Gastrocnemius medialis (tissue), 4 donors: ENCODE measurements at regions of chr19 and their contacts with region 1.

Region 1: GRCh38 chr19:56393119-56394012 is at the start of gene ZNF582:
- DNase-seq: peak; percentile 81 to 87
- ATAC-seq: peak; percentile 95 to 96
- H3K4me3 ChIP-seq: peak within 1 kb of the TSS; percentile 68 to 83 (median 74)
- H3K27ac ChIP-seq: peak within 1 kb of the TSS; percentile 76 to 88 (median 85)
- H3K4me1 ChIP-seq: no peaks in the 10 kb centered on the region
- H3K27me3 ChIP-seq: no peaks in the 10 kb centered on the region
- CTCF ChIP-seq: peak in 4 of 5 experiments; percentile 17 to 71 (median 56)
- POLR2A ChIP-seq: peak in 1 of 2 donors; percentile 25
- total RNA-seq, gene ZNF582: 0.22 to 1.9 (median 0.83) TPM

Region 2: GRCh38 chr19:56367829-56368711 is 25.3 kb before region 1 on chr19:
- in situ Hi-C with region 1: no loop called
- intact Hi-C with region 1: loop called (anchors 1 kb)
- DNase-seq: peak; percentile 75 to 90
- ATAC-seq: peak; percentile 96 to 97
- H3K4me3 ChIP-seq: peak overlapping the region; percentile 75 to 94 (median 80)
- H3K27ac ChIP-seq: peak overlapping the region; percentile 78 to 86 (median 84)
- H3K4me1 ChIP-seq: peaks cover 10 to 18% of the 10 kb centered on the region in 2 donors
- H3K27me3 ChIP-seq: no peaks in the 10 kb centered on the region
- CTCF ChIP-seq: peak in 1 of 5 experiments; percentile 14
- POLR2A ChIP-seq: peak; percentile 23 to 39

Region 3: GRCh38 chr19:56403764-56404704 is 10.7 kb after region 1 on chr19 and contains the start of gene ZNF583:
- in situ Hi-C with region 1: no loop called
- intact Hi-C with region 1: loop called (anchors 1 kb)
- DNase-seq: peak; percentile 89 to 97
- ATAC-seq: peak; percentile 96 to 99
- H3K4me3 ChIP-seq: peak within 1 kb of the TSS; percentile 66 to 95 (median 84)
- H3K27ac ChIP-seq: peak within 1 kb of the TSS; percentile 90 to 93 (median 92)
- H3K4me1 ChIP-seq: peaks cover 12 to 14% of the 10 kb centered on the region in 2 donors
- H3K27me3 ChIP-seq: no peaks in the 10 kb centered on the region
- CTCF ChIP-seq: no peak
- POLR2A ChIP-seq: no peak
- total RNA-seq, gene ZNF583: 3.5 to 9.2 (median 4.3) TPM

Region 4: DNA sequence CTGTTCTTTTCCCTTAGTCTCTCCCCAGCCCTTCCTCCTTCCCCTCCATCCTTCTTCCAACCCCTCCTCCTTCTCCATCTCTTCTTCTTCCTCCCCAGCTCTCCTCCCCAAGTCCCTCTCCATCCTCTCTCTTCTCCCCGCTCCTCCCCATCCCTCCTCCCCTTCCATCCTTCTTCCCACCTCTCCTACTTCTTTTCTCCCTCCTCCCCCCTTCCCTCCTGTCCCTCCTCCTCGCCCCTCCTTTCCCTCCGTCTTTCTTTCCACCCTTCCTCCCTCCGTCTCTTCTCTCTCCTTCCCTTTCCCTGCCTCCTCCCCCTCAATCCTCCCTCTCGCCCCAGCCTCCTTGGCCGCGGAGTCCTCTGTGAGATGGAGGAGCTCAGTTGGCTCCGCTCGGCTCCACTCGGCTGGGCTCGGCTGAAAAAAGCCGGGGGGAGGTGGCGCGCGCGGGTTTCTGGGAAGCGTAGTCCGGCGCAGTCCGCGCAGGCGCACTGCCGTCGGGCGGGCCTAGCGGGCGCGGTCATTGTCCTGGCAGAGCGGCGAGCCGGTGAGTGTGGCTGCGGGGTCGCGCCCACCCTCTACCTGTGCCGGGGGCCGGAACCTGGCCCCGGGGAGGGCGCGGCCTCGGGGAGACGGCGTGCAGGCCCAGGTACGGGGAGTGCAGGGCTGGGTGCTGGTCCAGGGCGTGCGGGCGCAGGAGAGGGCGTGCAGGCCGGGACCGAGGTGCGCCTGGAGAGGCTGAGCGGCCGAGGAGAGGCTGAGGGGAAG is 201.6 kb after region 1 on chr19 and contains the start of gene ZNF71:
- in situ Hi-C with region 1: no loop called
- intact Hi-C with region 1: loop called (anchors 10 kb)
- DNase-seq: peak; percentile 71 to 75
- ATAC-seq: peak; percentile 77 to 90
- H3K4me3 ChIP-seq: peak within 1 kb of the TSS; percentile 73 to 98 (median 84)
- H3K27ac ChIP-seq: peak within 1 kb of the TSS; percentile 76 to 82 (median 78)
- H3K4me1 ChIP-seq: peaks cover 12 to 18% of the 10 kb centered on the region in 2 donors
- H3K27me3 ChIP-seq: no peaks in the 10 kb centered on the region
- CTCF ChIP-seq: no peak
- POLR2A ChIP-seq: peak in 1 of 2 donors; percentile 28
- total RNA-seq, gene ZNF71: 6.7 to 7.5 (median 7.4) TPM

Region 5: DNA sequence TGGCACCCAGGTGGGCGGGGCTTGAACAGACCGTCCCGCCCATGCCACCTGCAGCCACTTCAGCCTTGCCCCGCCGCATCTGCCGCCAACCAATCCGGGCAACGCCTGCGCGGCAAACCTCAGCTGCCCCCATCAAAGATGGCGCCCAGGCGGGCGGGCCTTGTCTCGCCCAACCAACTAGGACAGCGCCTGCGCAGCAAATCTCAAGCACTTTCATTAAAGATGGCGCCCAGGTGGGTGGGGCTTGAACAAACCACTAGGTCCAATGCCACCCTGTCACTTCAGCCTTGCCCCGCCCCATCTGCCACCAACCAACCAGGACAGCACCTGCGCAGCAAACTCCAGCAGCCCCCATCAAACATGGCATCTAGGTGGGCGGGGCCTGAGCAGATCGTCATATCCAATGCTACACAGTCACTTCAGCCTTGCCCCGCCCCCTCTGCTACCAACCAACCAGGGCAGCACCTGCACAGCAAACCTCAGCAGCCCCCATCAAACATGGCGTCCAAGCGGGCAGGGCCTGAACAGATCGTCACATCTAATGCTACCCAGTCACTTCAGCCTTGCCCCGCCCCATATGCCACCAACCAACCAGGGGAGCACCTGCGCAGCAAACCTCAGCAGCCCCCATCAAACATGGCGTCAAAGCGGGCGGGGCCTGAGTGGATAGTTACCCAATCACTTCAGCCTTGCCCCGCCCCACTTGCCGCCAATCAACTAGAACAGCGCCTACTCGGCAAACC is 445.7 kb after region 1 on chr19:
- in situ Hi-C with region 1: no loop called
- intact Hi-C with region 1: loop called (anchors 10 kb)
- DNase-seq: peak; percentile 85 to 88
- ATAC-seq: peak; percentile 67 to 74
- H3K4me3 ChIP-seq: peak overlapping the region in 2 of 4 donors; percentile 40 to 54
- H3K27ac ChIP-seq: peak overlapping the region; percentile 47 to 65 (median 52)
- H3K4me1 ChIP-seq: no peaks in the 10 kb centered on the region
- H3K27me3 ChIP-seq: no peaks in the 10 kb centered on the region
- CTCF ChIP-seq: no peak
- POLR2A ChIP-seq: no peak

Region 6: DNA sequence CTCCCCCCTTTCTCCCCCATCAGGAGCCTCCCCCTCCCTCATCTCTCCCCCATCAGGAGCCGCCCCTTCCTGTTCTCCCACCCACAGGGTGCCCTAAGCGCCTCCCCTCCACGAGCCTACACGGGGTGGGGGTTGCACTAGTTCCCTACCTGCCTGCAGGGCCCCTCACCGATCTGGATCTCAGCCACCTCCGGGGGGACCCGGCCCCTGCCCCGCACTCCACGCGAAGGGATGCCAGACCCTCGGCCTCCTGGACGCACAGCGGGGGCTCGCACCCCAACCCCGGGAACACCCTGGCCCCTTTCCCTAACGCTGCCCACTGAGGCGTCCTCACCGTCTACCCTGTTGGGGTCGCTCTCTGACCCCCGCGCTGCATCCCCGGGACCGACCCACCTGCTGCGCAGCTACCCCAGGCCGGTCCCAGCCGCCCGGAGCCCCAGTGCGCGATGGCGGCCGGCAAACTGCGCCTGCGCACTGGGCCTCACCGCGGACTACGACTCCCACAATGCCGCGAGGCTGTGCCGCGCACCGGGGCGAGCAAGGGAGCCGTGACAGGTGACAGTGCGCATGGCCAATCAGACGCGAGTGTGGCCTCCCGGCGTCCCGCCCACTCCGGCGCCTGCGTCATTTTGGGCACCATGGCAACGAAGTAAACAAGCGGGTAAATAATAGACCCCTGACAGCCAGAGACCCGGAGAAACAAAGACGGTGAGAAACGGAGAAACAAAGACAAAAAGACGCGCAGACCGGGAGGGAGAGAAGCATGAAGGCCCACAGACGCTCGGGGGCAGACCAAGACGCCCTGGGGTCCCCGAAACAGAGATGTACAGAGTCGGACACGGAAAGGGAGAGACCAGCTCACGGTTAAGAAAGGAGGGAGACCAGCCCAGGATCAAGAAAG is 1704.7 kb after region 1 on chr19 and contains the start of gene ZSCAN18:
- in situ Hi-C with region 1: no loop called
- intact Hi-C with region 1: loop called (anchors 5 kb)
- DNase-seq: peak; percentile 89 to 92
- ATAC-seq: peak; percentile 98 to 99
- H3K4me3 ChIP-seq: peak within 1 kb of the TSS; percentile 85 to 99 (median 98)
- H3K27ac ChIP-seq: peak within 1 kb of the TSS; percentile 83 to 89 (median 86)
- H3K4me1 ChIP-seq: peaks cover 5 to 9% of the 10 kb centered on the region in 2 donors
- H3K27me3 ChIP-seq: no peaks in the 10 kb centered on the region
- CTCF ChIP-seq: no peak
- POLR2A ChIP-seq: peak; percentile 28 to 35
- total RNA-seq, gene ZSCAN18: 11.2 to 20.6 (median 15.2) TPM